ENCODE measurements at regions of chr17 and their contacts with region 1.

Region 1: DNA sequence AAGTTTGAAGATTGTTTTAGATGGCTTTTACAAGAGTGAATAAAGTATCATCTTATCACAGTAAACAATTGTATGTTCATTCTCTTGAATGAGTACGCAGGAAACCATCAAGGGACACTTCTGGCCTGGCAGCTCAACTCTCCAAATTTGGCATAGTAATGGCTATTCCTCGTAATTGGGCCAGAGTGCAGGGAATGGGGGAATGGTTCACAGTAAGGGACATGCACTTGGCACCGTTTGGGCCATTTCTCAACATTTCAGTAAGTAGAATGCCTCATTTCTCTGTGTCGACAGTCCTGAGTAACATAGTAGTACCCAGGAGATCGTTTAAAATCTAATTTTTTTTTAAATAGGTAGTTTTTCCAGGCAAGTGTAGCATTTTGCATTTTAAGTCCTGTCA is 309.6 kb downstream of the KCNJ2 start:
- DNase-seq: peak in 2 of 5 donors; percentile 32 to 56
- ATAC-seq: peak; percentile 35 to 94 (median 77)
- H3K4me3 ChIP-seq: no peak overlapping the region
- H3K27ac ChIP-seq: peak overlapping the region in 8 of 12 donors; percentile 2 to 54 (median 21)
- H3K4me1 ChIP-seq: peaks cover 0 to 17% (median 0%) of the 10 kb centered on the region in 12 donors
- H3K27me3 ChIP-seq: no peaks in the 10 kb centered on the region
- CTCF ChIP-seq: no peak
- POLR2A ChIP-seq: no peak

Region 2: GRCh38 chr17:70521821-70522256 is 42.9 kb after region 1 on chr17:
- intact Hi-C with region 1: loop called in 1 of 10 experiments (anchors 10 kb)
- DNase-seq: peak in 4 of 5 donors; percentile 64 to 79 (median 70)
- ATAC-seq: peak; percentile 52 to 92 (median 87)
- H3K4me3 ChIP-seq: peak overlapping the region in 1 of 12 donors; percentile 3
- H3K27ac ChIP-seq: peak overlapping the region in 9 of 12 donors; percentile 14 to 80 (median 53)
- H3K4me1 ChIP-seq: peaks cover 0 to 27% (median 8%) of the 10 kb centered on the region in 12 donors
- H3K27me3 ChIP-seq: no peaks in the 10 kb centered on the region
- CTCF ChIP-seq: no peak
- POLR2A ChIP-seq: no peak